Endothelial cell of umbilical vein (primary cell): ENCODE measurements at regions of chr2 and their contacts with region 1.

Region 1: DNA sequence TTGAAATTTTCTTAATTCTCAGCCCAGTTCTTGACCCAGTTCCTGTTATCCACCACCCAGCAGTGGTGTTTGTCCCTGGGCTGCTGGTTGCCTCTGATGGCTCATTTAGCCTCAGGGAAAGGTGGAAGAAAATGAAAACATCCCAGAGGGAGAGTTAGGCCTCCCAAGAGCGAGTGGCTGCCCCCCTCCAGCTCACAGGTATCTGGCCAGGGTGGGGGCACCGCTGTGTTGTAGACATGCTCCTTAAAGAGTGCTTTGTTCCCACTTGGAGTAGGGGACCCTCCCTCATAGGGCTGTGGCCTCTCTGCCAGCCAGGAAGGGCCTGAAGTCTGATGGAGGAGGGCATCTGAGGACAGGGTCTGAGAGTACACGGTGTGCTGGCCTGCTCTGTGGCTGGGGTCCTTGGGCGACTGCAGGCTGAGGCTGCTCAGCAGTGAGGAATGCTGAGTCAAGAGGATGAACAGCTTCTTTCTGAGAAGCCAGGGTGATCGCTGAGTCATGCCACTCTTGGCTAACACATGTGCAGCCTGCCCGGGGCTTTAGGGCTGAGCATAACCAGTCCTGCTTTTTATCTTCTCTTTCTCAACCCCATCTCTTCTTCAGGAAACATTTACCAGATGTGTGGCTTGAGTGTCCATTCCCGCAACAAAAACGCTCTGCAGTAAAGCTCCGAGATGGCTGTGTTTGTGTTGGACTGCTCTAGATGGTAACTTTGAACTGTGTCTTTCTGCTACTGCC is 72.3 kb downstream of the IL1R2 start:
- DNase-seq: peak; percentile 86
- H3K4me3 ChIP-seq: no peak overlapping the region
- H3K27ac ChIP-seq: peak overlapping the region; percentile 50
- H3K4me1 ChIP-seq: peaks cover 17% of the 10 kb centered on the region
- H3K27me3 ChIP-seq: no peaks in the 10 kb centered on the region
- CTCF ChIP-seq: no peak
- POLR2A ChIP-seq: peak; percentile 3

Region 2: DNA sequence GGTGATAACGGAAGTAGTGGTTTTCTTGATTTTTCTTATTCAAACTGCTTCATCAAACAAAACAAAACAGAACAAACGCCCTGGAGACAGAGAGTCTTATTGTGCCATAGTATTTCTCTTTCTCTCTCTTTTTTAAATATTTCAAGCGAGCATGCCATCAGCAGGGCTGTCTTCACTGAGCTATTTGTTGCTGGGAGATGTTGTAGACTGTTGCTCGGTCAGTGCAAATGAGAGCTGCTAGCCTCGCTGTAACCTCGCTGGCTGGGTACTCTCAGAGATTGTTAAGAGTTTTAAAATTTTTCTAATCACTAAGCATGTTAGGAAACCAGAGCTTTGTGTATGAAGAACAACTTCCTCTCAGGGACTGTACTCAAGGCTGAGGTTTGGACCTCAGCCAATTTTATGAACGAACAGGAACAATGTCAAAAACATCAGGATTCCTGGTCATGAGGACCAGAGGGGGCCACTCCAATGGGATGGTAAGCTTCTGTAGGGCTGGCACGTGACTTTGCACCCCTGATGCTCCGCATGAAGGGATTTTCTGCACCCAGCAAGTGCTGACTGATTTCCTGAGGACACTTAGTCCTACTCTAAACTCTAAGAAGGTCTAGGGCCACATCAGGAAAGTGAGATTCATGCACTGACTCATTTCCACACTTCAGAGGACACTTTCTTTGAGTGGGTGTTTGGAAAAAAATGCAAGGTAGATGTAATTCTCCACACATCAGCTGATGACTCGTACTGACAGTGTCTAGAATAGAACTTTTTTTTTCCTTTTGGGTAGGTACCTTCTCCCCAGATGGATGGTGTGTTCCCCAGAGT is 18.7 kb after region 1 on chr2:
- CTCF ChIA-PET with region 1: interaction called, 6 read pairs
- POLR2A ChIA-PET with region 1: no interaction called
- dilution Hi-C with region 1: no loop called
- intact Hi-C with region 1: loop called (anchors 2 kb)
- DNase-seq: peak; percentile 88
- H3K4me3 ChIP-seq: peak overlapping the region in 1 of 3 experiments; percentile 19
- H3K27ac ChIP-seq: peak overlapping the region; percentile 60
- H3K4me1 ChIP-seq: peaks cover 20% of the 10 kb centered on the region
- H3K27me3 ChIP-seq: no peaks in the 10 kb centered on the region
- CTCF ChIP-seq: no peak
- POLR2A ChIP-seq: no peak

Region 3: GRCh38 chr2:102141970-102142828 is 78.1 kb after region 1 on chr2 and contains the start of gene IL1R1:
- CTCF ChIA-PET with region 1: interaction called, 3 read pairs
- POLR2A ChIA-PET with region 1: no interaction called
- dilution Hi-C with region 1: no loop called
- intact Hi-C with region 1: loop called (anchors 5 kb)
- DNase-seq: peak; percentile 73
- H3K4me3 ChIP-seq: peak within 1 kb of the TSS; percentile 56 to 63 (median 63)
- H3K27ac ChIP-seq: peak within 1 kb of the TSS; percentile 16
- H3K4me1 ChIP-seq: peaks cover 14% of the 10 kb centered on the region
- H3K27me3 ChIP-seq: no peaks in the 10 kb centered on the region
- CTCF ChIP-seq: no peak
- POLR2A ChIP-seq: peak; percentile 32
- total RNA-seq, gene IL1R1: 2.9 and 5.5 TPM in 2 replicates